PC-9 (cell line): ENCODE measurements at regions of chr7 and their contacts with region 1.

Region 1: GRCh38 chr7:137592232-137592896 is 248.8 kb upstream of the PTN start:
- DNase-seq: peak; percentile 46 to 74
- H3K4me3 ChIP-seq: no peak overlapping the region
- H3K27ac ChIP-seq: no peak overlapping the region
- H3K4me1 ChIP-seq: peaks cover 11% of the 10 kb centered on the region
- H3K27me3 ChIP-seq: no peaks in the 10 kb centered on the region
- CTCF ChIP-seq: peak; percentile 91

Region 2: DNA sequence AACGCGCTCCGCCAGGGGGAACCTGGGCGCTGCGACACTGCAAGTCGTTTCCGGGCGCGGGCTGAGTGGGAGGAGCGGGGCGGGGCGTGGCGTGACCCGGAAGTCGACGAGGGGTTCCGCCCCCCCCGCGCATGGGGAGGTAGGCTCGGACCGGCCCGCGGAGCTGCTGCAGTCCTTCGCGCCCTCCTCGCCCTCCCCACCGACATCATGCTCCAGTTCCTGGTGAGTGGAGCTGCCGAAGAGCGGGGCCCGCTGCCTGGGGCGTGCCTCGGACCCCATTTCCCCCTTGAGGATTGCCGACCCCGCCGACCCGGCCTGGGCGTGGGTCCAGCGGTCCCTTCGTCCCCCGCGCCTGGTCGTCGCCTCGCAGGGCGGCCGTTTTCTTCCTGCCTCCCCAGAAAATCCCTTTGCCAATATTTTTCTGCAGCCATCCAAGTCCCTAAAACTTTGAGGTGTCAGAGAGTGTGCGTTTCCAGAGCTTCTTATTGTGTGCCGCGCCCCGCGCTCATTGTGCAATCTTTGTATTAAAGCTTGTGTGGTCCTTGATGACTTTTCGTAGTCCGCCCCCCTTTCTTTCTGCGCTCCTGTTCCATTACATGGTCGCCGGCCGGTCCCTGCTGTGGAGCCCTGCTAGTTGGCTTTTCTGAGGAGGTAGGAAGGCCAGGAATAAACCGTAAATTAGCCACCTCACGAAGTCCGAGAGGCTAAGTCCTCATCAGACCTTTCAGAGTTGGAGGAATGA is 1929.8 kb before region 1 on chr7 and contains the start of gene STMP1:
- CTCF ChIA-PET with region 1: no interaction called
- POLR2A ChIA-PET with region 1: no interaction called
- intact Hi-C with region 1: loop called (anchors 5 kb)
- DNase-seq: peak; percentile 83 to 97
- H3K4me3 ChIP-seq: peak within 1 kb of the TSS; percentile 99
- H3K27ac ChIP-seq: peak within 1 kb of the TSS; percentile 92
- H3K4me1 ChIP-seq: peaks cover 16% of the 10 kb centered on the region
- H3K27me3 ChIP-seq: no peaks in the 10 kb centered on the region
- CTCF ChIP-seq: peak; percentile 89
- total RNA-seq, gene STMP1: 60.4 and 77.0 TPM in 2 replicates

Region 3: GRCh38 chr7:135977007-135977741 is 1615.2 kb before region 1 on chr7 and contains the start of gene MTPN:
- CTCF ChIA-PET with region 1: no interaction called
- POLR2A ChIA-PET with region 1: no interaction called
- intact Hi-C with region 1: loop called (anchors 5 kb)
- DNase-seq: peak; percentile 96 to 99
- H3K4me3 ChIP-seq: peak within 1 kb of the TSS; percentile 97
- H3K27ac ChIP-seq: peak within 1 kb of the TSS; percentile 52
- H3K4me1 ChIP-seq: peaks cover 29% of the 10 kb centered on the region
- H3K27me3 ChIP-seq: no peaks in the 10 kb centered on the region
- CTCF ChIP-seq: no peak
- total RNA-seq, gene MTPN: 181 and 212 TPM in 2 replicates

Region 4: GRCh38 chr7:136874238-136875032 is 717.9 kb before region 1 on chr7:
- CTCF ChIA-PET with region 1: no interaction called
- POLR2A ChIA-PET with region 1: no interaction called
- intact Hi-C with region 1: loop called (anchors 10 kb)
- DNase-seq: no peak
- H3K4me3 ChIP-seq: no peak overlapping the region
- H3K27ac ChIP-seq: no peak overlapping the region
- H3K4me1 ChIP-seq: no peaks in the 10 kb centered on the region
- H3K27me3 ChIP-seq: no peaks in the 10 kb centered on the region
- CTCF ChIP-seq: peak; percentile 72

Region 5: DNA sequence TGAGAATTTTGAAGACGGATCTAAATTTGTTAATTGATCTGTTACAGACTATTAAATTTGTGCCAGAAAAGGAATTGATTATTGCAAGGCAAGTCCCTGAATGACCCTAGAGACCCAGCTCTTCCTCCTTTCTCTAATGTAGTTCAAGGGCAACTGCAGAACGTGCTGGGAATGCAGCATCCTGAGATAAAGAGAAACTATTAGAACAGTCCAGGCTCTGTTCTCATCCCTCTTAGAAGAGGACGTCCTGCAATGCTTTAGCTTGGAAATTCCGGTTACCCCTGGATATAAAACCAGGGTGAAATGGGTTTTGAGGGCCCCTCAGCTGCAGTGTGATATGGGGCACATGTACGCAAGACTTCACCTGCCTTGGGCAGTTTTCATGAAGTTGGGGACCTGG is 316.2 kb before region 1 on chr7:
- CTCF ChIA-PET with region 1: no interaction called
- POLR2A ChIA-PET with region 1: no interaction called
- intact Hi-C with region 1: loop called (anchors 10 kb)
- DNase-seq: no peak
- H3K4me3 ChIP-seq: no peak overlapping the region
- H3K27ac ChIP-seq: no peak overlapping the region
- H3K4me1 ChIP-seq: no peaks in the 10 kb centered on the region
- H3K27me3 ChIP-seq: no peaks in the 10 kb centered on the region
- CTCF ChIP-seq: no peak

Region 6: GRCh38 chr7:137454246-137454724 is 138.1 kb before region 1 on chr7:
- CTCF ChIA-PET with region 1: no interaction called
- POLR2A ChIA-PET with region 1: no interaction called
- intact Hi-C with region 1: loop called (anchors 1 kb)
- DNase-seq: peak in 1 of 2 experiments; percentile 38
- H3K4me3 ChIP-seq: no peak overlapping the region
- H3K27ac ChIP-seq: no peak overlapping the region
- H3K4me1 ChIP-seq: no peaks in the 10 kb centered on the region
- H3K27me3 ChIP-seq: 0 out of 2 replicates have a peak, but pooled peaks cover 11% of the 10 kb centered on the region
- CTCF ChIP-seq: peak; percentile 87